Activated B cell treated with CpG ODN at 0.5 μM for 24 hours (primary cell): ENCODE measurements at regions of chr9 and their contacts with region 1.

Region 1: GRCh38 chr9:117644133-117644931 is 59.9 kb upstream of the TLR4 start:
- DNase-seq: peak; percentile 51
- ATAC-seq: peak; percentile 69
- H3K4me3 Mint-ChIP-seq: no peak overlapping the region
- H3K27ac Mint-ChIP-seq: no peak overlapping the region
- H3K4me1 Mint-ChIP-seq: peaks cover 11% of the 10 kb centered on the region
- H3K27me3 Mint-ChIP-seq: peaks cover 20% of the 10 kb centered on the region
- CTCF ChIP-seq: peak; percentile 40

Region 2: GRCh38 chr9:117444501-117444900 is 199.8 kb before region 1 on chr9:
- CTCF ChIA-PET with region 1: no interaction called
- POLR2A ChIA-PET with region 1: no interaction called
- intact Hi-C with region 1: no loop called
- DNase-seq: no peak
- ATAC-seq: no peak
- H3K4me3 Mint-ChIP-seq: no peak overlapping the region
- H3K27ac Mint-ChIP-seq: no peak overlapping the region
- H3K4me1 Mint-ChIP-seq: no peaks in the 10 kb centered on the region
- H3K27me3 Mint-ChIP-seq: no peaks in the 10 kb centered on the region
- CTCF ChIP-seq: no peak

Region 3: DNA sequence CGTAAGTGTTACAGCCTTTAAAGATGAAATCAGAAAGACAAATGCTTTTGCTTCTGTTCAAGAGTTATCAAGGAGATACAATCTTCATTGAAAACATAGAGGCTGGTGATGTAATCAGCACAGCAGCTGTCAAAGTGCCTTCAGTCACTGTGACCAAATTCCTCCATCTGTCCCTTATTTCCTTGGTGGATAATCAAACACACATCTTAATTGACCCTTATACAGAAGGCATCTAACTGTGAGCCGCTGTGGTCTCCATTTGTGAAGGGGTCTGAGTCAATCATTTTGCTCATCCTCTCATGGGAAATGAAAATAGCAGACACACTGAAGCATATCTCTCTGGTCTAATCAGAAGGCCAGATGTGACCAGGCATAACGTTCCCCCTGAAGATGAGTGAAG is 70.2 kb before region 1 on chr9:
- CTCF ChIA-PET with region 1: no interaction called
- POLR2A ChIA-PET with region 1: no interaction called
- intact Hi-C with region 1: no loop called
- DNase-seq: no peak
- ATAC-seq: no peak
- H3K4me3 Mint-ChIP-seq: no peak overlapping the region
- H3K27ac Mint-ChIP-seq: no peak overlapping the region
- H3K4me1 Mint-ChIP-seq: no peaks in the 10 kb centered on the region
- H3K27me3 Mint-ChIP-seq: no peaks in the 10 kb centered on the region
- CTCF ChIP-seq: no peak

Region 4: GRCh38 chr9:117782931-117783788 is 138.8 kb after region 1 on chr9:
- CTCF ChIA-PET with region 1: interaction called, 3 read pairs
- POLR2A ChIA-PET with region 1: no interaction called
- intact Hi-C with region 1: loop called (anchors 1 kb)
- DNase-seq: peak; percentile 34
- ATAC-seq: peak; percentile 60
- H3K4me3 Mint-ChIP-seq: no peak overlapping the region
- H3K27ac Mint-ChIP-seq: no peak overlapping the region
- H3K4me1 Mint-ChIP-seq: no peaks in the 10 kb centered on the region
- H3K27me3 Mint-ChIP-seq: no peaks in the 10 kb centered on the region
- CTCF ChIP-seq: peak; percentile 87

Region 5: DNA sequence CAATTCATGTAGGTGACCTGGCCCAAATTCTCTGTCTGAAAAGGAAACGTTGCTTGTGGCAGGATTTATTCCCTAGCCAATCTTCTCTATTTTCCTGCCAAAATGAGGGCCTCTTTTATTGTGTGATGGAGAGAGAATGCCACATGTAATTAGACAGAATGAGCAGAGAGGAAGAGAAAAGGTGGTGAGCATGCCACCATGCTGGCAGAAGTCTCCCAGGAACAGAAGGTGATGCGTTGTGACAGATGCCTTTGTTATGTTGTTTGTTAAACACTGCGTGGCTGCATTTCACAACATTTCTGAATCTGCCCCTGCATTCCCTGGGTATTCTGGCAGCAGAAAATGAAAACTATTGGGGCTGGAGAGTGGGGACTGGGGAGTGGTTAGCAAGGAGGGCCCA is 637.4 kb after region 1 on chr9:
- CTCF ChIA-PET with region 1: no interaction called
- POLR2A ChIA-PET with region 1: no interaction called
- intact Hi-C with region 1: loop called (anchors 10 kb)
- DNase-seq: no peak
- ATAC-seq: no peak
- H3K4me3 Mint-ChIP-seq: no peak overlapping the region
- H3K27ac Mint-ChIP-seq: no peak overlapping the region
- H3K4me1 Mint-ChIP-seq: no peaks in the 10 kb centered on the region
- H3K27me3 Mint-ChIP-seq: no peaks in the 10 kb centered on the region
- CTCF ChIP-seq: no peak

Region 6: DNA sequence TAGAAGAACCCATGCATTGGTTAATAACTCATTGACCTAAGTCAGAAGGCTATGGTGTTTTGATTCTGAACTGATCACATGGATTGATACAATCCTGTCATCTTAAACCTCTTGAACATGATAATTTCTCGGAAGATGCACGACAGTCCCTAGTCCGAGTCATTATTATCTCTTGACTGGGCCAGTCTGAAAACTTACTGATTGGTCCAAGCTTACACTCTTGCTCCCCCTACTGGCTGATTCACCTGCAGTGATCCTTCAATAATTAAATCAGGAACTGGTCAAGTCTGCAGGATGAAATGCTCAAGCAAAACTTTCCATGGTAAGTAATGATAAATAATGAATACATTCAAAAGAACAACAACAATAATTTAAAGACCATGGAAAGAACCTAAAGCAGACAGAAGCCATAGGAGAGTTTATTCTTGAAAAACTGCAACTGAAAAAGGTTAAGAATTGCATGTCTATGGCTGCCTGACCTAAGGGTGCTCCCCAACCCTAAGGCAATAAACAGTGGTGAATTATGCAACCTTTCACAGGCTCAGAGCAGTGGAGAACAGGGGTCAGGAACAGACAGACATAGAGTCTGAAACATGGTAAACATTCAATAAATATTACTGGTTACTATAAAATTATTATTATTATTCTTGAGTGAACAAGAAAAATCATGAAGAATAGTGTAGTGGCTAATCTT is 1645.6 kb after region 1 on chr9:
- CTCF ChIA-PET with region 1: interaction called, 4 read pairs
- POLR2A ChIA-PET with region 1: no interaction called
- intact Hi-C with region 1: loop called (anchors 1 kb)
- DNase-seq: no peak
- ATAC-seq: no peak
- H3K4me3 Mint-ChIP-seq: no peak overlapping the region
- H3K27ac Mint-ChIP-seq: no peak overlapping the region
- H3K4me1 Mint-ChIP-seq: no peaks in the 10 kb centered on the region
- H3K27me3 Mint-ChIP-seq: peaks cover 1% of the 10 kb centered on the region
- CTCF ChIP-seq: no peak

Region 7: DNA sequence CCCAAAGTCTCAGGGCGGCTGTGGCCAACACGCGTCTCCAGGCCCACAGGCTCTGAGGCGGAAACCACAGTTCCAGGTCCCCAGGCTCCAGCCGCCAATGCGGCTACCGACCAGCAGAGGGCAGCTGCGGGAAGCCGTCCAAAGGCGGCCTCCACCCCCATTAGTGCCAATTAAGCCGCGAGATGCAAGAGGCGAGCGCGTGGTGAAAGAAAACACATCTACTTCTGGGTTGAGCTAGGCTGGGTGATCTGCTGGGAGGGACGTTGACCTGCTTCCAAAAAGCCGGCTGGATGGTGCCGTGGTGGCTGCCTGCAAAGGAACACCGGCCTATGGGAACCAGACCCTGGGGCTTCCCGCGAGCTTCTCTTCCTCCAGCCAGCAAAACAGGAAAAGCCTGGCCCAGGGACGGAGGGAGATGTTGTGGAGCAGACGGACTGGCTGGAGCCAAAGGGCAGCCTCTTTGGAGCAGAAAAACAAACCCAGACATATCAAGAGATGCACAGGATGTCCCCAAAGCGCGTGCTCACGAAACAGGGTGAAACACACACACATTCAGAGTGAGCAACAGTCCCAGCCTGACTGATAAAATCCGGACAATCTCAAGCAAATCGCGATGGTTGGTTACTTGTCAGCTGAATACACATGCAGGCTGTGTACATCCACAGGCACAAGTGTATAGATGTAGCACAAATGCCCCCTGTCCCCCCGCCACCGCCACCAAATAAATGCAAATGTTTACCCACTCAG is 1912.0 kb after region 1 on chr9:
- CTCF ChIA-PET with region 1: interaction called, 3 read pairs
- POLR2A ChIA-PET with region 1: no interaction called
- intact Hi-C with region 1: loop called (anchors 2 kb)
- DNase-seq: peak; percentile 32
- ATAC-seq: no peak
- H3K4me3 Mint-ChIP-seq: no peak overlapping the region
- H3K27ac Mint-ChIP-seq: no peak overlapping the region
- H3K4me1 Mint-ChIP-seq: peaks cover 5% of the 10 kb centered on the region
- H3K27me3 Mint-ChIP-seq: peaks cover 34% of the 10 kb centered on the region
- CTCF ChIP-seq: no peak